ENCODE measurements at regions of chr7 and their contacts with region 1.

Region 1: DNA sequence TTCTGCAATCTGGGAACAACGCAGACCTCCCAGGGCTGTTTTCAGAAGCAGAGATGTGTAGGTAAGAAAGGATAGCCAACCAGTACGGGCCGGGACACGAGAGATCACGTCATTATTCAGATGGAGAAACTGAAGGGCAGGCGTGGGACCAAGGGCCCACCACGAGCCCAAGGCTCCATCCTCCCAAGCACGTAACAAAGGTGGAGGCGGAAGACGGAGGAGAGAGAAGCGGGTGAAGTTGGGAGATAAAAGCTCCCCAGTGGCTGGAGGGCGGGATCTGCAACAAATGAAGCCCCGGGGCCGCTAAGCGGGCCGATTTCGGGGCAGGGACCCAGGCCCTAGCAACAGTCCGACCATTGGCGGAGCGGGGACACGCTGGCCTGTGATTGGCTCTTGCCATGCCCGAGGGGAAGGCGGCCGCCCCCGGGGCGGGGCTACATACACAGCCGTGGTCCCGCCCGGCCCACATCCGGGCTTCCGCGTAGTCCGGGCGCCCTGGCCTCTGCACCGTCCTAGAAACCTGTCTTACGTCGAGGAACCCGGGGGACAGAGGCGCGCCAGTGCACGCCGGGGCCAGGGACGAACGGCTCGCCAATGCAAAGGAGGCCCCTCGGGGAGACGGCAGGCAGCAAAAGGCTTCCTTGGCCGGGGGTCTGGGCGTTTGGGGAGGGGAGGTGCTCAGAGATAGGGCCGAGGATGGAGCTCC is 15.5 kb downstream of the HSPB1 start:
- DNase-seq: peak; percentile 97
- H3K4me3 ChIP-seq: peak overlapping the region; percentile 78
- H3K27ac ChIP-seq: peak overlapping the region; percentile 99
- H3K4me1 ChIP-seq: no peaks in the 10 kb centered on the region
- H3K27me3 ChIP-seq: no peaks in the 10 kb centered on the region
- CTCF ChIP-seq: no peak

Region 2: GRCh38 chr7:76179686-76180085 is 138.2 kb before region 1 on chr7:
- intact Hi-C with region 1: loop called (anchors 1 kb)
- DNase-seq: no peak
- H3K4me3 ChIP-seq: no peak overlapping the region
- H3K27ac ChIP-seq: no peak overlapping the region
- H3K4me1 ChIP-seq: no peaks in the 10 kb centered on the region
- H3K27me3 ChIP-seq: no peaks in the 10 kb centered on the region
- CTCF ChIP-seq: no peak

Region 3: DNA sequence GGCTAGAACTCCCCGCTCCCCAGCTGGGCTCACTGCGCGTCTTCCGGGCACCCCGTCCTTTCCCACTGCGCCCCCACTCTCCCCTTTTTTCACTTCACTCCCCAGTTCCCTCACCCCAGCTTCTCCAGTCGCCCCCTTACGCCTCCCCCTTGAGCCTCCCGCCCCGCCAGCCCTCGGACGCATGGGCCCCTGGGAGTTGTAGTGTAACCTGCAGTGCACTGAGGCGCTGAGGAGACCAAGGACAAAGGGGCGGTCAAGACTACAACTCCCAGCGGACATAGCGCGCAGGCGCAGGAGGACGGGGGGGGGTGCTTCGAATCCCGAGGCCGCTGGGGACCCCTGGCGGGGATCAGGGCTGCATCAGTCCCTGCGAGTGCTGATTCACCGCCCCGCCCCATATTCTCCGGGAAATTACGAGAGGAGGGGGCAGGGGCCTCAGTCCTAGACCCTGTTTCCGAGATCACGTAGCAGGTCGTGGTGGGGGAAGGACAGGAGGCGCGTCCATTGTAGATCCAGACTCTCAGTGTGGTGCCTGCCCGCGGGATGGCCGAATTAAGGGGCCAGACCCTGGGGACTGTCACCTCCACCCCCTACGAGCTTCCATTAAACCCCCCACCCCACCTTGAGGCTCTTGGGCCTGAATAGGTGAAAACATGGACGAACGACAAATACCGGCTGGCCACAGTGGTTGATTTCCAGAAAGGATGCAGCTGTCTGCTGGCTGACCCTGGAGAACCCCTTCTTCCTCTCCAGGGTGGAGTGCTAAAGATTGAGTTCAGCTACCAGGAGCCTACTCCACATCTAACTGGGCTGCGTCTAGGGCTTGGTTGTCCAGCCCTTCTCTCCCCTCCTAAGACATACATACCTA is 41.4 kb after region 1 on chr7:
- intact Hi-C with region 1: loop called (anchors 2 kb)
- DNase-seq: peak; percentile 98
- H3K4me3 ChIP-seq: peak overlapping the region; percentile 98
- H3K27ac ChIP-seq: peak overlapping the region; percentile 100
- H3K4me1 ChIP-seq: peaks cover 7% of the 10 kb centered on the region
- H3K27me3 ChIP-seq: no peaks in the 10 kb centered on the region
- CTCF ChIP-seq: peak; percentile 49

Measured in colonic mucosa (tissue), 4 donors.